ENCODE measurements at regions of chr16 and their contacts with region 1.

Region 1: GRCh38 chr16:80948886-80949493 is 57.7 kb downstream of the CMC2 start:
- DNase-seq: peak; percentile 17
- H3K4me3 Mint-ChIP-seq: no peak overlapping the region
- H3K27ac Mint-ChIP-seq: no peak overlapping the region
- H3K4me1 Mint-ChIP-seq: peaks cover 18% of the 10 kb centered on the region
- H3K27me3 Mint-ChIP-seq: peaks cover 6% of the 10 kb centered on the region

Region 2: DNA sequence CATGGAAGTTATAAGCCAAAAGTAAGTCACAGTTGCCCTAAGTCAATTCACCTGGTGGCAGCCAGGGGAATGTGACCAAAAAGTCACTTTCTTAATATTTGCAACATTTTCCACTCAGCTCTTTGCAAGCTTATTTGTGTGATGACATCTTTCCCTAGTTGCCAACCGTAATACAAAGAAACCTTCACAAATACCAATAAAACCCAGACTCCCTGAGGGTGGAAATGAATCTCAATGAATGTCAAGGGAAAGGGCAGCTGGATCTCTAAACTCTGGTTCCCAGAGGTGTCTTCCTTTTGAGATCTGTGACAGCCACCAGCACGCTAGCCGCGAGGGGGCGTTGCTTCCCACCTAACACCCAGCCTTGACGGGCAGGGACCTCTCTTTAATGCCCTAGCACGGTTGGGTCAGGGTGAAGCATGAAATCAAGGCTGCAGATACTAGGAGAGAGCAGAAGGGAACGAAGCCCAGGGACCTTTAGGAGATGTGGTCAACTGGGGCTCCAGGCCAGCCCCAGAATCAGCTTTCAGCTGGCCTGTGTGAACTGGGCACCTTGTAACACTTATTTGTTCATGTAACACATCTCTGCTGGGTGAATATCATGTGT is 24.5 kb before region 1 on chr16:
- intact Hi-C with region 1: loop called (anchors 2 kb)
- DNase-seq: no peak
- H3K4me3 Mint-ChIP-seq: no peak overlapping the region
- H3K27ac Mint-ChIP-seq: no peak overlapping the region
- H3K4me1 Mint-ChIP-seq: no peaks in the 10 kb centered on the region
- H3K27me3 Mint-ChIP-seq: peaks cover 5% of the 10 kb centered on the region

Measured in activated T-helper 1 cell treated with anti-CD3 and anti-CD28 coated beads, Interleukin-12 subunit alpha, Interleukin-12 subunit beta, Interleukin-2, Interleukin-4 antibody, amounts not matched to agents 30 ng/mL and 10 ng/mL and 1 ng/mL, durations not matched to agents 14 hours and 24 hours and 36 hours (primary cell).